ENCODE measurements at regions of chr2 and their contacts with region 1.

Region 1: DNA sequence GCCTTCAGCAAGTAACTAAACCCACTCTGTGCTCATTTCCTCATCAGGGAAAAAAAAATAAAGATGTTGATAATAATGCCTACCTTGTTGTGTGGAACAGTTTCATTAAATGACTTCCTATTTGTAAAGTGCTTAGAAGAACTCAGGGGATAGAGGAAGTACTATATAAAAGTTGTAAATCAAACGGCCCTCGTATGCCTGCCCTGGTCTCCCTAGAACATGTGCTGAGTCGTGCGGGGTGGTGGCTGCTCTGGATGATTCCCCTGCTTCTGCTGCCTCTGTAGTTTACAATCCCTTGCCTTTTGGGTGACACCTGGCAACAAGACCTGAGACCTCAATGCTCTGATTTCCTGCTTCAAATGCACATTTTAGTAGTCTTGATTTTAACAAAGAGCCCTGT is 170.0 kb downstream of the CERS6 start:
- DNase-seq: no peak
- H3K4me3 ChIP-seq: no peak overlapping the region
- CTCF ChIP-seq: no peak

Region 2: GRCh38 chr2:168521053-168521741 is 104.9 kb before region 1 on chr2:
- in situ Hi-C with region 1: loop called (anchors 5 kb)
- DNase-seq: no peak
- H3K4me3 ChIP-seq: no peak overlapping the region
- CTCF ChIP-seq: no peak

Region 3: GRCh38 chr2:168573128-168573903 is 52.8 kb before region 1 on chr2:
- in situ Hi-C with region 1: loop called (anchors 10 kb)
- DNase-seq: no peak
- H3K4me3 ChIP-seq: no peak overlapping the region
- CTCF ChIP-seq: no peak